HCT116 (cell line): ENCODE measurements at regions of chr15 and their contacts with region 1.

Region 1: GRCh38 chr15:101014921-101015841 is 96.0 kb downstream of the LRRK1 start:
- DNase-seq: peak; percentile 32
- ATAC-seq: peak; percentile 86
- H3K4me3 ChIP-seq: no peak overlapping the region
- H3K27ac ChIP-seq: no peak overlapping the region
- H3K4me1 ChIP-seq: no peaks in the 10 kb centered on the region
- H3K27me3 ChIP-seq: no peaks in the 10 kb centered on the region
- CTCF ChIP-seq: peak; percentile 89 to 97 (median 89)
- POLR2A ChIP-seq: no peak
- RAD21 ChIP-seq: peak; percentile 87

Region 2: GRCh38 chr15:100687582-100688141 is 327.5 kb before region 1 on chr15:
- CTCF ChIA-PET with region 1: no interaction called
- POLR2A ChIA-PET with region 1: no interaction called
- RAD21 ChIA-PET with region 1: no interaction called
- intact Hi-C with region 1: no loop called
- DNase-seq: no peak
- ATAC-seq: no peak
- H3K4me3 ChIP-seq: no peak overlapping the region
- H3K27ac ChIP-seq: no peak overlapping the region
- H3K4me1 ChIP-seq: peaks cover 0 to 3% of the 10 kb centered on the region in 2 experiments; a peak in 1 of 4 replicates
- H3K27me3 ChIP-seq: no peaks in the 10 kb centered on the region
- CTCF ChIP-seq: no peak
- POLR2A ChIP-seq: no peak
- RAD21 ChIP-seq: no peak

Region 3: GRCh38 chr15:101027273-101027901 is 12.2 kb after region 1 on chr15:
- CTCF ChIA-PET with region 1: no interaction called
- POLR2A ChIA-PET with region 1: no interaction called
- RAD21 ChIA-PET with region 1: no interaction called
- intact Hi-C with region 1: no loop called
- DNase-seq: no peak
- ATAC-seq: no peak
- H3K4me3 ChIP-seq: no peak overlapping the region
- H3K27ac ChIP-seq: no peak overlapping the region
- H3K4me1 ChIP-seq: no peaks in the 10 kb centered on the region
- H3K27me3 ChIP-seq: no peaks in the 10 kb centered on the region
- CTCF ChIP-seq: no peak
- POLR2A ChIP-seq: no peak
- RAD21 ChIP-seq: no peak

Region 4: DNA sequence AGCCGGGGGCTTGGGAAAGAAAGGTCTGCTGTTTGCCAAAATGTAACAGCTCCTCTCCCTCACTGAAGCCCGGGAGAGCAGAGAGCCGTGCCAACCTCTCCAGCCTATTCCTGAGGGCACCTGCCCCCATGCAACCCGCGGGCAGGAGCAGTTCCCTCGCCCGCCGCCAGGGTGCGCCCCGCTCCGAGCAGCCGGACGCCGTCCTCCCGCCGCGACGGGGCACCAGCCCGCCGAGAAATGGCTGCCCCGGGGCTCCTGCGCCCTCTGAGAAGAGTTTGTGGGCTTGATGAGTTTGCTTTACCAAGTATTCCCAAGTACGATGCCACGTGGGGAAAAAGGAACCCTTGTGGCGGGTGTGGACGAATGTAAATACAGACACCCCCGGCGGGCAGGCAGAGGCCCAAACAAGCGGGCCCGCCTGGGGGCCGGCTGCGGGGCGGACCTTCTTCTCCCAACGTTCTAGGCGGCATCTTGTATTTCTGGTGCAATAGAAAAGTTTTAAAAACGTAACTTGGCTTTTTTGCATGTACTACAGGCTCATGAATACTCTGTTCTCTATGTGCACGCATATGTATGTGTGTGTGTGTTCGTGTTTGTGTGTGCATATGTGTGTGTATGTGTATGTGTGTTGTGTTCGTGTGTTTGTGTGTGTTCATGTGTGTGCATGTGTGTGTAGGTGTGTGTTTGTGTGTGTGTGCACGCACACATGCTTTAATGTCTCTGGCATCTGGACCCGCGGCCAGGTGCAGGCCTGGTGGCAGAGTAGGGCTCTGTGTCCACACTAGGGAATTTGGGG is 73.8 kb after region 1 on chr15:
- CTCF ChIA-PET with region 1: no interaction called
- POLR2A ChIA-PET with region 1: no interaction called
- RAD21 ChIA-PET with region 1: no interaction called
- intact Hi-C with region 1: loop called (anchors 10 kb)
- DNase-seq: peak; percentile 26
- ATAC-seq: peak; percentile 96
- H3K4me3 ChIP-seq: peak overlapping the region; percentile 34 to 57
- H3K27ac ChIP-seq: peak overlapping the region; percentile 3; the same call in 1 of the 2 replicates
- H3K4me1 ChIP-seq: peaks cover 0 to 9% of the 10 kb centered on the region in 2 experiments; a peak in 1 of 4 replicates
- H3K27me3 ChIP-seq: no peaks in the 10 kb centered on the region
- CTCF ChIP-seq: peak; percentile 92 to 99 (median 98)
- POLR2A ChIP-seq: no peak
- RAD21 ChIP-seq: peak; percentile 92